ENCODE measurements at regions of chr5 and their contacts with region 1.

Region 1: GRCh38 chr5:110757118-110757729 is 18.4 kb downstream of the SLC25A46 start:
- DNase-seq: no peak
- H3K4me3 ChIP-seq: no peak overlapping the region
- H3K27ac ChIP-seq: no peak overlapping the region
- H3K4me1 ChIP-seq: no peaks in the 10 kb centered on the region
- H3K27me3 ChIP-seq: no peaks in the 10 kb centered on the region
- CTCF ChIP-seq: peak; percentile 60 to 66

Region 2: DNA sequence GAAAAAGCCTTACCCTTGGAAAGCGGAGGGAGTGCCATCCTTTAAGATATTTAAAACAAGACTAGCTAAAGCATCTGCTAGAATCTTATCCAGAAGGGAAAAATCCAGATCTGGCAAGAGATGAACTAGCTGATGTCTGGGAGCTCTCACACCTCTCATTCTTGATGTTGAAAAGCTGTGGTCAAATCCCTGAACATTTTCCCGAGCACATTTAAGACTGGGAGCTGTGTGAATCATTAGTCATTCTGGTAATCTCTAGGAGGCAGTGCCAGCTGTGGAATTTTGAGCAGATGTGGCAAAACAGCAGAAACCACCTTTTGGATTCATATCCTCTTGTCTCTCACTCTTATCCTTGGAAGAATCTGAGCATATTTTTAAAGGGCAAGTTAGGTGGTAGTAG is 849.5 kb before region 1 on chr5:
- intact Hi-C with region 1: no loop called
- DNase-seq: no peak
- H3K4me3 ChIP-seq: no peak overlapping the region
- H3K27ac ChIP-seq: no peak overlapping the region
- H3K4me1 ChIP-seq: peaks cover 0 to 12% (median 2%) of the 10 kb centered on the region in 4 donors
- H3K27me3 ChIP-seq: no peaks in the 10 kb centered on the region
- CTCF ChIP-seq: no peak

Region 3: GRCh38 chr5:110925398-110925797 is 168.2 kb after region 1 on chr5:
- intact Hi-C with region 1: no loop called
- DNase-seq: no peak
- H3K4me3 ChIP-seq: no peak overlapping the region
- H3K27ac ChIP-seq: no peak overlapping the region
- H3K4me1 ChIP-seq: peaks cover 0 to 24% (median 2%) of the 10 kb centered on the region in 4 donors
- H3K27me3 ChIP-seq: no peaks in the 10 kb centered on the region
- CTCF ChIP-seq: no peak

Region 4: GRCh38 chr5:111223889-111224563 is 466.8 kb after region 1 on chr5 and contains the start of gene CAMK4:
- intact Hi-C with region 1: loop called (anchors 5 kb)
- DNase-seq: peak; percentile 45 to 68
- H3K4me3 ChIP-seq: peak within 1 kb of the TSS; percentile 57
- H3K27ac ChIP-seq: peak within 1 kb of the TSS in 1 of 2 donors; percentile 25
- H3K4me1 ChIP-seq: peaks cover 0 to 16% (median 11%) of the 10 kb centered on the region in 4 donors
- H3K27me3 ChIP-seq: no peaks in the 10 kb centered on the region
- CTCF ChIP-seq: no peak